KBM-7 (cell line): ENCODE measurements at regions of chr20 and their contacts with region 1.

Region 1: DNA sequence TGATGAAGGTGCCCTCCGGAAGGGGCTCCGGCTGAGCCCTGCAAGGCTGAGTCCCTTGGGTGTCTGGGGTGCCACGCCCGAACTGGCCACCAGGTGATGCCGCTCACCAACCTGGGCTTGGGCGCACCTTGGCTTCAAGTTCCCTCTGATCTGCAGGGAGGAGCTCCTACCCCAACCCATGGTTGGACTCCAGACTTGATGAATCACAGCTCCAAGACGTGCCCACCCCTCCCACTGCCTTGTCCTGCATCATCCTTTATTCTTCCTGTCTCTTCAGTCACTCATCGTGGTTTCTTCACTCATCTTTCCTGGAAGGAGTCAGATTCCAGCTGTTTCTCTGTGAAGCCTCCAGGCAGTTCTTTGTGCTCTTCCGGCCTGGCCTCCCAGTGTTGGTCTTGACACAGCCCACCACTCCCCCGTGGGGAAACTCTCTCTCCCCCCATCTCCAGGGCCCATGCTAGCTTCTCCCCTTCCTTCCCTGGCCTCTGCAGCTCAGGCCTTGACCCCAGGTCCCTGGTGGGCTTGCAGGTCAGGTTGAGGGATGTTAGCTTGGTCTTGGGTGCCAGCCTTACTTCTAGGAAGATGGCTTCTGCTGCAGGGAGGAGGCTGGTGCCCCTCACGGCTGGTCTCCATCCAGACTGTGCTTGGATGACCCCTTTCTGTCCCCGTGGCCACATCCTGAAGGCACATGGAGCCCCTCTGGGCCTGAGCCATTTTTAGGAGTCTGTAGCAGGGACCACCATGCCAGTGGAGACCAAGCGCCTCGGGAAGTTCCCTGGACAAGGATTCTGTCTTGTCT is 2.6 kb upstream of the ZBP1 start:
- DNase-seq: peak; percentile 28

Region 2: GRCh38 chr20:58179432-58180099 is 556.8 kb after region 1 on chr20:
- in situ Hi-C with region 1: loop called (anchors 25 kb)
- DNase-seq: peak; percentile 68

Region 3: GRCh38 chr20:58277578-58278472 is 655.0 kb after region 1 on chr20:
- in situ Hi-C with region 1: no loop called
- DNase-seq: no peak